ENCODE measurements at regions of chr2 and their contacts with region 1.

Region 1: DNA sequence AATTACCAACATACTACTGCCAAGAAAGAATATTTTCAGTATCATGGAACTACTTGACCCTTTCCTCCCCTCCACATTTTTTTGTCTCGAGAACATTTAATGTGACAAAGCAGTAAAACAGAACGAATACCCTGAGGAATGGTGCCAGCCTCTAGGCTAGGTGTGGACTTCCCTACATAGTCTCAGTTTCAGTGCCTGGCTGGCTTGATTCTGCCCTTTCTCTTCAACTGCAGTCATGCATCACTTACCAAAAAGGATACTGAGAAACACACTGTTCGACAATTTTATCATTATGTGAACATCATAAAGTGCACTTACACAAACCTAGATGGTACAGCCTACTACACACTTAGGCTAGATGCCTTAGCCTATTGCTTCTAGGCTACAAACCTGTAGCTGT is 305.3 kb upstream of the HNRNPA3 start:
- DNase-seq: no peak
- ATAC-seq: no peak
- H3K4me3 ChIP-seq: no peak overlapping the region
- H3K27ac ChIP-seq: no peak overlapping the region
- H3K4me1 ChIP-seq: no peaks in the 10 kb centered on the region
- H3K27me3 ChIP-seq: no peaks in the 10 kb centered on the region
- CTCF ChIP-seq: no peak

Region 2: GRCh38 chr2:176744146-176744545 is 163.2 kb before region 1 on chr2:
- intact Hi-C with region 1: loop called in 1 of 2 experiments (anchors 5 kb)
- DNase-seq: no peak
- ATAC-seq: no peak
- H3K4me3 ChIP-seq: no peak overlapping the region
- H3K27ac ChIP-seq: no peak overlapping the region
- H3K4me1 ChIP-seq: peaks cover 3% of the 10 kb centered on the region
- H3K27me3 ChIP-seq: peaks cover 0 to 7% (median 0%) of the 10 kb centered on the region in 3 donors
- CTCF ChIP-seq: no peak

Region 3: DNA sequence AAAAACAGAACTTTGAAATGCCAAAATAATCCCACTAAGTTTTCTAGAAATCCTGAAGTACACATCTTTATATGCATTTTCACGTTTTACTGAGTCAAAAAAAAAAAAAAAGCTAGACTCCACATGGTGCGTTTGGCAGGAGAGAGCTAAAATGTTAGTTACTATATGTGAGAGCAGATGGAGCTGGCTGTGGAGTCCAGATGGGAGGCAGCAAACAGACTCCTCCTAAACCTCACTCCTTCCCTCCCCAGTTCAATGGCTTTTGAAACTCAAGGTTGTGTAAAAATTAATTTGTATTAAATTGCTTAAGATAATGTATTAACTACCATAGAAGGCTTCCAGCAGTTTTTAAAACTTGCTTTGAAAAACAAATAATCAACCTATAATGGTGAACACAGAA is 734.0 kb after region 1 on chr2:
- intact Hi-C with region 1: no loop called
- DNase-seq: no peak
- ATAC-seq: no peak
- H3K4me3 ChIP-seq: no peak overlapping the region
- H3K27ac ChIP-seq: no peak overlapping the region
- H3K4me1 ChIP-seq: no peaks in the 10 kb centered on the region
- H3K27me3 ChIP-seq: no peaks in the 10 kb centered on the region
- CTCF ChIP-seq: no peak